Activated CD8-positive, alpha-beta T cell treated with anti-CD3 and anti-CD28 coated beads for 36 hours (primary cell): ENCODE measurements at regions of chr11 and their contacts with region 1.

Region 1: GRCh38 chr11:35485656-35486322 is 39.6 kb downstream of the PAMR1 start:
- DNase-seq: peak; percentile 85
- ATAC-seq: peak; percentile 90
- H3K4me3 Mint-ChIP-seq: no peak overlapping the region
- H3K27ac Mint-ChIP-seq: no peak overlapping the region
- H3K4me1 Mint-ChIP-seq: no peaks in the 10 kb centered on the region
- H3K27me3 Mint-ChIP-seq: peaks cover 32% of the 10 kb centered on the region
- CTCF ChIP-seq: peak; percentile 81

Region 2: GRCh38 chr11:35474688-35475087 is 11.1 kb before region 1 on chr11:
- CTCF ChIA-PET with region 1: interaction called, 21 read pairs
- POLR2A ChIA-PET with region 1: interaction called, 3 read pairs
- intact Hi-C with region 1: no loop called
- DNase-seq: no peak
- ATAC-seq: no peak
- H3K4me3 Mint-ChIP-seq: no peak overlapping the region
- H3K27ac Mint-ChIP-seq: no peak overlapping the region
- H3K4me1 Mint-ChIP-seq: no peaks in the 10 kb centered on the region
- H3K27me3 Mint-ChIP-seq: peaks cover 17% of the 10 kb centered on the region
- CTCF ChIP-seq: no peak